ENCODE measurements at regions of chr12 and their contacts with region 1.

Region 1: DNA sequence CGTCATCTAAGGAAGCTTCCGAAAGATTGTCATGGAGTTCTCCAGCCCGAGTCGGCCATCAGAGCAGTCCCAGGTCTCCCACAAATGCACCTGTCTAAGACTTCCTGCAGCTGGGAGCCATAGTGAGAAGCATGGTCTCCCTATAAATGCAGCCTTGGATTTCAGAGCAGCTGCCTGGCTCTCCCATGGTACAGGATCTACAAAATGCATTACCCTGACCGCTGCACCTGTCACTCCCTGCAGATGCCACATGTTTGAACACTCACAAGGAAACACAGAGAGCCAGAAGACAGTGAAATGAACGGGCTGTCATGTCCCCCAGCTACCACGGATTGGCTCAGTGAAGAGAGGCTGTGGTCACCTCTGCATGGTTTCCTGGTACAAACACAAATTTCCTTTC is 702.7 kb downstream of the MED13L start:
- DNase-seq: no peak
- H3K4me3 ChIP-seq: no peak overlapping the region
- H3K27ac ChIP-seq: no peak overlapping the region
- H3K4me1 ChIP-seq: no peaks in the 10 kb centered on the region
- H3K27me3 ChIP-seq: no peaks in the 10 kb centered on the region
- CTCF ChIP-seq: no peak
- POLR2A ChIP-seq: no peak

Region 2: GRCh38 chr12:114245555-114245954 is 1329.3 kb before region 1 on chr12:
- intact Hi-C with region 1: loop called (anchors 5 kb)
- DNase-seq: no peak
- H3K4me3 ChIP-seq: no peak overlapping the region
- H3K27ac ChIP-seq: no peak overlapping the region
- H3K4me1 ChIP-seq: no peaks in the 10 kb centered on the region
- H3K27me3 ChIP-seq: no peaks in the 10 kb centered on the region
- CTCF ChIP-seq: no peak
- POLR2A ChIP-seq: no peak

Measured in vagina (tissue), 2 donors.